MCF 10A (cell line): ENCODE measurements at regions of chr2 and their contacts with region 1.

Region 1: GRCh38 chr2:180077295-180077906 is 70.3 kb upstream of the CWC22 start:
- DNase-seq: peak; percentile 37
- H3K4me3 Mint-ChIP-seq: no peak overlapping the region
- H3K27ac Mint-ChIP-seq: no peak overlapping the region
- H3K4me1 Mint-ChIP-seq: no peaks in the 10 kb centered on the region
- H3K27me3 Mint-ChIP-seq: no peaks in the 10 kb centered on the region
- CTCF ChIP-seq: peak; percentile 76

Region 2: DNA sequence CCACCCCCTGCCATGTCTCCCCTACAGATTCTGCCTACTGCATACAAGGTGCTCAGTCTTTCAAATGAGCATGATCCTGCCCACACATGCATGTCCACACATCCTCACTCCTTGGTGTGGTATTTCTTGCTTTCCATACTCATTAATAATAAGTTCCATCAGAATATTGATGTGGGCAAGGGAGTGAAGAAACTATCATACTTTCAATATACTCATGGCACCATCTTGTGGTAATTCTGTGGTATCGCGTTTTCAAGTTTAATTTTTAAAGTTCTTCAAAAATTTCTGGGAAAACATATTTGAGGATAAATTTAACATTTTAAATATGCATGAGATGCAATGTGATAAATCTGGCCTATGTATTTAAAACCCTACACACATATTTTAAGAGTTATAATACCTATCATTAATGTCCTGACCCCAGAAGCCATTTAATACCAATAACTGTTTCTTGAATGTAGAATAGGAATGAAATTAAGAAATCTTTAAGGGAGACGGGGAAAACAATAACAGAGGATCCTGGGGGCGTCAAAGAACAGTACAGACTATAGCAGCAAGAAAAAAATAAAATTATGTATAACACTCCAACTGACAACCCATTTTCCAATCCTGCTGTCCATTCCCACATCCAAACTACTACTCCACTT is 326.1 kb before region 1 on chr2:
- CTCF ChIA-PET with region 1: no interaction called
- POLR2A ChIA-PET with region 1: no interaction called
- intact Hi-C with region 1: loop called (anchors 5 kb)
- DNase-seq: peak; percentile 32
- H3K4me3 Mint-ChIP-seq: no peak overlapping the region
- H3K27ac Mint-ChIP-seq: no peak overlapping the region
- H3K4me1 Mint-ChIP-seq: peaks cover 26% of the 10 kb centered on the region
- H3K27me3 Mint-ChIP-seq: no peaks in the 10 kb centered on the region
- CTCF ChIP-seq: peak; percentile 66

Region 3: GRCh38 chr2:179981085-179981484 is 96.3 kb before region 1 on chr2:
- CTCF ChIA-PET with region 1: interaction called, 17 read pairs
- POLR2A ChIA-PET with region 1: no interaction called
- intact Hi-C with region 1: no loop called
- DNase-seq: peak; percentile 53
- H3K4me3 Mint-ChIP-seq: no peak overlapping the region
- H3K27ac Mint-ChIP-seq: peak overlapping the region; percentile 12
- H3K4me1 Mint-ChIP-seq: no peaks in the 10 kb centered on the region
- H3K27me3 Mint-ChIP-seq: no peaks in the 10 kb centered on the region
- CTCF ChIP-seq: no peak

Region 4: GRCh38 chr2:180006781-180007579 is 70.4 kb before region 1 on chr2 and contains the start of gene CWC22:
- CTCF ChIA-PET with region 1: interaction called, 37 read pairs
- POLR2A ChIA-PET with region 1: interaction called, 5 read pairs
- intact Hi-C with region 1: loop called (anchors 1 kb)
- DNase-seq: peak; percentile 92
- H3K4me3 Mint-ChIP-seq: peak within 1 kb of the TSS; percentile 93
- H3K27ac Mint-ChIP-seq: peak within 1 kb of the TSS; percentile 100
- H3K4me1 Mint-ChIP-seq: peaks cover 28% of the 10 kb centered on the region
- H3K27me3 Mint-ChIP-seq: no peaks in the 10 kb centered on the region
- CTCF ChIP-seq: no peak
- total RNA-seq, gene CWC22: 34.0 and 38.8 TPM in 2 replicates

Region 5: DNA sequence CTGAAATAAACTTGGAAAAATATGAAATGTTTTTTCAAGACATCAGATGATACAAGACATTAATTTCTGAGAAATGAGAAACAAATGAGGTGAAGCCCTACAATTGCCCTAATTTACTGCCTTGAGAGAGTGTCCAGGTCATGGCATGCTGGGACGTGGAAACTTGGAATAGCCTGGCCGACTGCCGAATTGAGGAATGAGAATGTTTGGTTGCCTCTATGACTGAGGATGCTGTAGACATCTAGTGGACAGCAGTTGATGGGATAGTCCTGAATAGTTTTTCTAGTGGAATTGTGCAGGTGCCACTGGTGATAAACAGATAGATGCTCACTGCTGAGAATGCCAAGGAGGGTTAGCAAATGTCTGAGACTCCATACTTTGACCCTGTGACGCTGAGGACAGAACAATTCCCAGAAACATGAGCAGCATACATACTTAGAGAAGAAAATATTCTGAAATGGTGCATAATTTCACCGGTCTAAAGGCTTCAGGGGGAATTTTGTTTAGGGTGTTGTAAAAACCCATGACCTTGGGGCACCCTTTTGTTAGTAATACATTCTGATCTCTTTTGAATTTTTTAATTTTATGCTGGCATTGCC is 13.8 kb before region 1 on chr2:
- CTCF ChIA-PET with region 1: interaction called, 18 read pairs
- POLR2A ChIA-PET with region 1: no interaction called
- intact Hi-C with region 1: no loop called
- DNase-seq: peak; percentile 4
- H3K4me3 Mint-ChIP-seq: no peak overlapping the region
- H3K27ac Mint-ChIP-seq: no peak overlapping the region
- H3K4me1 Mint-ChIP-seq: no peaks in the 10 kb centered on the region
- H3K27me3 Mint-ChIP-seq: no peaks in the 10 kb centered on the region
- CTCF ChIP-seq: no peak